Heart left ventricle (tissue), 16 donors: ENCODE measurements at regions of chr10 and their contacts with region 1.

Region 1: DNA sequence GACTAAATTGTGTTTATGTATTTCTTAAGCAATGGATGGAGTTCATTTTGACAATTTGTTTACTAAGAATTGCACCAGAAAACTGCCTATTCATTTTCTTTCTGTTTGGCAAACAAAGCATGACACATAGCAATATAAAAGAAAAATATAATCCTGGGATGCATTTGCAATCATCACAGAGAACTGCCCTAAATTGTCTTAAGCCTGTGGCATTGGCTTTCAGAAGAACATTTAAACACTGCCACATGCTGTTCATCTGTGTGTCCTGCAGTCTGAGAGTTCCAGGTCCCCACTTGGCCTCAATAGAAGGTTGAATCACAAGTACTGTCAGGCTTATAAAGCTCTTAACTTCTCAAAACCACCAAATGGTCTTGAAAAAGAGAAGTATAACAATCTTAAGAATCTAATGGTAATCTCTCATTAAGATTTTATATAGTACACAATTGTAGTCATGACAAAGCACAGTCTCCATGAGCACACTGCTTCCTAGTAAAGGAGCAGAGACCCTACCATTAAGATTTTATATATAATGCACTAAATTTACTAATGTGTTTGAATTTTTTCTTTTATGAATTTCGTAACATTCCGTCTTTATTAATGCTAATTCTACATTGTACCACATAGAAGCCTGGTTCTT is 29.9 kb downstream of the RNLS start:
- DNase-seq: peak in 4 of 5 donors; percentile 29 to 47 (median 40)
- ATAC-seq: peak; percentile 88 to 96 (median 90)
- H3K4me3 ChIP-seq: no peak overlapping the region
- H3K27ac ChIP-seq: no peak overlapping the region
- H3K4me1 ChIP-seq: peaks cover 0 to 2% (median 0%) of the 10 kb centered on the region in 12 donors
- H3K27me3 ChIP-seq: no peaks in the 10 kb centered on the region
- CTCF ChIP-seq: peak; percentile 58 to 85 (median 70)
- POLR2A ChIP-seq: no peak

Region 2: GRCh38 chr10:87850742-87851205 is 702.5 kb before region 1 on chr10:
- intact Hi-C with region 1: loop called in 9 of 10 experiments (anchors 2 to 5 kb)
- DNase-seq: peak in 4 of 5 donors; percentile 55 to 77 (median 62)
- ATAC-seq: peak in 3 of 4 donors; percentile 93 to 96 (median 94)
- H3K4me3 ChIP-seq: no peak overlapping the region
- H3K27ac ChIP-seq: no peak overlapping the region
- H3K4me1 ChIP-seq: peaks cover 0 to 9% (median 0%) of the 10 kb centered on the region in 12 donors
- H3K27me3 ChIP-seq: no peaks in the 10 kb centered on the region
- CTCF ChIP-seq: peak; percentile 46 to 81 (median 72)
- POLR2A ChIP-seq: no peak

Region 3: DNA sequence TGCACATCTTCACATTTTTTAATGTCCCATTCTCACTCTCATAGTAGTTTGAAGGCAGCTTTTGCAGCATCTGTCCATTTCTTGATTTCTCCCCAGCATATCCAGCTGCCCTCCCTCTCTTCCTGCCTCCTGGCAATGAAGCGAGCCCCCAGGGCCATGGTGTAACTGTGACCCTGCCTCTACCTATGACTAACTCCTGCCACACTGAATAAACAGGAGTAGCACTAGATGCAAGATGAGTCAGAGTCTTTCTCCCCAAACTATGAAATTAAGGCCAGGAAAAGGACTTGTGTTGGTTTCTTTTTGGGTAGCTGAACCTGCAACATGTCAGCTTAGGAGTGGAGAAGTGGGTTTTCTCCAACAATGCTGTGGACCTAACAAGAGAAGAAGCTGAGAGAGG is 299.1 kb before region 1 on chr10:
- intact Hi-C with region 1: loop called in 3 of 10 experiments (anchors 10 kb)
- DNase-seq: peak in 1 of 5 donors; percentile 41
- ATAC-seq: peak in 2 of 4 donors; percentile 63 to 67
- H3K4me3 ChIP-seq: no peak overlapping the region
- H3K27ac ChIP-seq: peak overlapping the region in 3 of 12 donors; percentile 23 to 84 (median 73)
- H3K4me1 ChIP-seq: peaks cover 0 to 44% (median 4%) of the 10 kb centered on the region in 12 donors
- H3K27me3 ChIP-seq: no peaks in the 10 kb centered on the region
- CTCF ChIP-seq: no peak
- POLR2A ChIP-seq: no peak

Region 4: GRCh38 chr10:88401671-88402347 is 151.4 kb before region 1 on chr10:
- intact Hi-C with region 1: loop called in 8 of 10 experiments (anchors 2 to 10 kb)
- DNase-seq: no peak
- ATAC-seq: no peak
- H3K4me3 ChIP-seq: no peak overlapping the region
- H3K27ac ChIP-seq: no peak overlapping the region
- H3K4me1 ChIP-seq: peaks cover 0 to 8% (median 0%) of the 10 kb centered on the region in 12 donors
- H3K27me3 ChIP-seq: no peaks in the 10 kb centered on the region
- CTCF ChIP-seq: peak in 6 of 12 donors; percentile 5 to 41 (median 28)
- POLR2A ChIP-seq: no peak

Region 5: GRCh38 chr10:88473989-88474883 is 79.0 kb before region 1 on chr10:
- intact Hi-C with region 1: loop called in 1 of 10 experiments (anchors 5 kb)
- DNase-seq: no peak
- ATAC-seq: peak in 3 of 4 donors; percentile 22 to 53 (median 36)
- H3K4me3 ChIP-seq: no peak overlapping the region
- H3K27ac ChIP-seq: peak overlapping the region in 7 of 12 donors; percentile 17 to 60 (median 51)
- H3K4me1 ChIP-seq: peaks cover 0 to 30% (median 5%) of the 10 kb centered on the region in 12 donors
- H3K27me3 ChIP-seq: no peaks in the 10 kb centered on the region
- CTCF ChIP-seq: no peak
- POLR2A ChIP-seq: no peak